IMR-90 (cell line): ENCODE measurements at regions of chr19 and their contacts with region 1.

Region 1: DNA sequence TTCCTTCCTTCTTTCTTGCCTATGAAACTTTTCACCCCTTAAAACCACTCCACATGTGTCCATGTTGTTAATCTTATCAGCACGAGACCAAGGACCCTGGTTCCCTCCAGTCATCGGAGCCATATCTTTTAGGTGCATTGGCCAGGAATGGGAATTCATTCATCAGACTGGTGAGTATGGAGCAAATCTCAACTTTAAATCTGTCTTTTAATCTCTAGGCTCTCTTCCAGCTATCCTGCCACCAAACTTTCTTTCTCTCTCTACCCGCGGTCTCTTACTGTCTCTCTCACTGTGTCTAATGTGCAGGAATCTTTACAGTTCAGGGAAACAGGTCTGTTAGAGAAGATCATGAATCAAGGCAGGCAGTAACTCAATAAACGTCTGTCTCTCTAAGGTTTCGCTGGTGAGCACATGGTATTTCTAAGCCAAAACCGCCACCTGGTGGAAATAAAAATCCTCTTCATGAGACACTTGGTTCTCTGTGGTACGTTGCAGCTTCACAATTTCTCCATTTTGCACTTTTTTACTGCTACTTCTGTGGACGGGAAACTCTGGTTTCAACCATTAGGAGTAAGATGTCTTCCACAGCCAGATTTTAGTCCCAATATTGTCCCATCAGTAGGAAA is 16.1 kb downstream of the LGALS16 start:
- DNase-seq: peak; percentile 43
- ATAC-seq: peak; percentile 69
- H3K4me3 ChIP-seq: no peak overlapping the region
- H3K27ac ChIP-seq: no peak overlapping the region
- H3K4me1 ChIP-seq: no peaks in the 10 kb centered on the region
- H3K27me3 ChIP-seq: 0 out of 2 replicates have a peak, but pooled peaks cover 1% of the 10 kb centered on the region
- CTCF ChIP-seq: peak; percentile 56
- POLR2A ChIP-seq: no peak
- RAD21 ChIP-seq: peak; percentile 68

Region 2: DNA sequence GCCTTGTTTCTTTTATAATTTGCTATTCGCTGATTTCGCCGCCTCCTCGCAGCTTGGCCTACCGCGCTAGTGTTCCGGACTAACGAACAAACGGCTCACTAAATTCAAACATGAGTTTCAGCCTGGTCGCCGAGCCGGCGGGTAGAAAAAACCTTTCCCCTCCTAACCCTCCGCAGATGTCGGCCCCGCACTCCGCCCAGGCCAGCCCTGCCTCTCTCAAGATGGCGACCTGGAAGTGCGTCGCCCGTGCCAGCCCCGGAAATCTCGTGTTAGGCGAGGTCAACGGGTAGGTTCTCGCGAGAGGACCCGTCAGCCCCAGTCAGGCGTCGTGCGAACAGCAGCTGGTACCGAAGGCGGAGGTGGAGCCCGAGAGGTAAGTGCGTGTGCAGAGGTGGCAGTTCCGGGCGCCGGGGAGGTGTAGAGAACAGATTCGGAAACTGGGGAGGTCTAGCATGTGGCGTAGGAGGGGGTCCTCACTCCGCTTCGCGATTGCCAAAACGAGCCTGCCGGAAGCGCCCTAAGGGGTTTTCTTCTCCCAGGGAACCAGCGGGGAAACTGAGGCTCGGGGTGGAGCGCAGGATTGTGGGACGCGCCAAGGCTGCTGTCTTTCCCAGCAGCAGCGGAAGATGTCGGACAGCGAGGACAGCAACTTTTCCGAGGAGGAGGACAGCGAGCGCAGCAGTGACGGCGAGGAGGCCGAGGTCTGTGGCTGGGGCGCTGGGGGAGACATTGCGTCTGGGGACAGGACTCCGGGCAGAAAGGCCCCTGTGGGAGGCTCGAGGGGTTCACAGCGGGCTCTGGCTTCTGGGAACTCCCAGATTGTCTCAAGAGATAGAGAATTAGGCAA is 226.4 kb before region 1 on chr19 and contains the start of gene SUPT5H:
- CTCF ChIA-PET with region 1: no interaction called
- POLR2A ChIA-PET with region 1: no interaction called
- dilution Hi-C with region 1: no loop called
- in situ Hi-C with region 1: no loop called
- intact Hi-C with region 1: loop called (anchors 2 kb)
- DNase-seq: peak; percentile 97
- ATAC-seq: peak; percentile 96
- H3K4me3 ChIP-seq: peak within 1 kb of the TSS; percentile 83
- H3K27ac ChIP-seq: peak within 1 kb of the TSS; percentile 96
- H3K4me1 ChIP-seq: peaks cover 5% of the 10 kb centered on the region
- H3K27me3 ChIP-seq: no peaks in the 10 kb centered on the region
- CTCF ChIP-seq: no peak
- POLR2A ChIP-seq: peak; percentile 94
- RAD21 ChIP-seq: no peak
- total RNA-seq, gene SUPT5H: 75.3 and 86.9 TPM in 2 replicates

Region 3: DNA sequence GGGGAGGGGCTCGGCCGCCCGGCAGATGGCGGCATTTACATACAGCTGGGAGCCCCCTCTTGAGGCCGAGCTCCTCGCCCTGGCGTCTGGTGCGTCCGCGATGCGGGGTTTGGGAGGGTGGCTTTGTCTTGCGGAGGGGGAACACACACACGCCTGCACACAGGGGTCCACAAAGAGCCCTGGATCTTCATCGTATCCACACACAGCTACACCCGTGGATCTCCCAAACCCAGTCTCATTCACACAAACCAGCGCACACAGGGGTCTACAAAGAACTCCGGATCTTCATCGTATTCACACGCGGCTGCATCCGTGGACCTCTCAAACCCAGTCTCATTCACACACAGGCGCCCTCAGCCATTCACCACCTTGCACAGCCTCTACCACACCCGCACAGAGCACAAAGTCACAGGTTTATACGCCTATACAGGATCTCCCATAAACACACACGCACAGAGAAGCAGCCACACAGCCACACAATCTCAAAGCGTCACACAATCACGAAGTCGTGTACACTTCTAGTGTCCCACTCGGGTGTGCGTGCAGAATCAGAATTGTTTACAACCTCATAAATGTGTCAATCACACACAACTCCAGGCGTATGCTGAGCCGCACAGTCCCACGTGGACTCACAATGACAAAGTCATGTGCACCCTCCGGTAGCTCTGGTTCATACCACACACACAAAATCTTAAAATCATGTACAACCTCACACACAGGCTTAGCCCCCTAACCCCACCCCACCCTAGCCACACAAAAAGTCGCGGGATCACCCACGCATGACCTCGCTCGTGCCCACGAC is 173.7 kb before region 1 on chr19:
- CTCF ChIA-PET with region 1: no interaction called
- POLR2A ChIA-PET with region 1: no interaction called
- dilution Hi-C with region 1: no loop called
- in situ Hi-C with region 1: no loop called
- intact Hi-C with region 1: loop called (anchors 5 kb)
- DNase-seq: peak; percentile 19
- ATAC-seq: peak; percentile 77
- H3K4me3 ChIP-seq: peak overlapping the region; percentile 24; the same call in 1 of the 2 replicates
- H3K27ac ChIP-seq: no peak overlapping the region
- H3K4me1 ChIP-seq: peaks cover 3% of the 10 kb centered on the region; the same call in 1 of the 2 replicates
- H3K27me3 ChIP-seq: peaks cover 36% of the 10 kb centered on the region
- CTCF ChIP-seq: peak; percentile 49
- POLR2A ChIP-seq: no peak
- RAD21 ChIP-seq: peak; percentile 39

Region 4: GRCh38 chr19:39509233-39509632 is 162.6 kb before region 1 on chr19:
- CTCF ChIA-PET with region 1: no interaction called
- POLR2A ChIA-PET with region 1: no interaction called
- dilution Hi-C with region 1: no loop called
- in situ Hi-C with region 1: no loop called
- intact Hi-C with region 1: no loop called
- DNase-seq: no peak
- ATAC-seq: no peak
- H3K4me3 ChIP-seq: no peak overlapping the region
- H3K27ac ChIP-seq: no peak overlapping the region
- H3K4me1 ChIP-seq: no peaks in the 10 kb centered on the region
- H3K27me3 ChIP-seq: peaks cover 35% of the 10 kb centered on the region
- CTCF ChIP-seq: no peak
- POLR2A ChIP-seq: no peak
- RAD21 ChIP-seq: no peak

Region 5: DNA sequence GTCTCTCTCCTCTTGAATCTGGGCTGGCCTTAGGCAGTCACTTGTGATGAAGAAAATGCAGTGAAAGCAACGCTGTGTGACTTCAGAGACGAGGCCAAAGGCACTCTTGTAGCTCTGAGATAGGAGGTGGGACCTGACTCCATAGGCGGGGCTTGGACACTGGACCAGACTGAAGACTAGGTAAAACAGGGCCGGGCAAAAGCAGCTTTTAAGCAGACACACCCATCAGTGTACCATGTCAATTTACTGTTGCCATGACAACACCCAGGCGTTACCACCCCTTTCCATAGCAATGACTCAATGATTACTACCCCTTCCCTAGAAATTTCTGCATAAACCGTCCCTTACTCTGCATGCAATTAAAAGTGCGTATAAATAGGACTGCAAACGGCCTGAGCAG is 125.3 kb before region 1 on chr19:
- CTCF ChIA-PET with region 1: no interaction called
- POLR2A ChIA-PET with region 1: no interaction called
- dilution Hi-C with region 1: no loop called
- in situ Hi-C with region 1: loop called (anchors 10 kb)
- intact Hi-C with region 1: loop called (anchors 1 kb)
- DNase-seq: no peak
- ATAC-seq: no peak
- H3K4me3 ChIP-seq: no peak overlapping the region
- H3K27ac ChIP-seq: no peak overlapping the region
- H3K4me1 ChIP-seq: no peaks in the 10 kb centered on the region
- H3K27me3 ChIP-seq: peaks cover 6% of the 10 kb centered on the region
- CTCF ChIP-seq: no peak
- POLR2A ChIP-seq: no peak
- RAD21 ChIP-seq: no peak

Region 6: DNA sequence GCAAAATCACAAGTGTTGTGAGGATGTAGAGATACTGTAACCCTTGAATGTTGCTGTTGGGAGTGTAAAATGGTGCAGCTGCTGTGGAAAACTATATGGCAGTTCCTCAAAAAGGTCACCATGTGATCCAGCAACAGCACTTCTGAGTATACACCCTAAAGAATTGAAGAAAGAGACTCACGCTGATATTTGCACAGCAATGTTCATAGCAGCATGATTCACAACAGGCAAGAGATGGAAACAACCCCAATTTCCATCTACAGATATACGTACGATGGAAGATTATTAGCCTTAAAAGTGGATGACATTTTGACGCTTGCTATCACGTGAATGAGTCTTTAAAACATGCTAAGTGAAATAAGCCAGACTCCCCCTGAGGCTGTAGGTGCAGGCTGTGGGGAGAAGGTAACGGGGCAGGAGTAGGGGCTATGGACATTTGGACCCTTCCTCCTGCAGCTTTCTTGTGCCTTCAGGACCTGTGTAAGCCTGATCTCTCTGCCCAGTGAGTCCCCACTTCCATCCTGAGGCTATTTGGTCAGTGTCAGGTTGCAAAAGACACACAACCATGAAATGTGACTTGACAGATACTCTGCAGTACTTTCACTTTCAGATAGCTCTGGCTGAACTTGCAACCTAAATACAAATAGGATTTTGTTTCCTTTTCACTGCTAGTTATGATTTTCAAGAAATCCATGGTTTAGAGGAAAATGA is 114.3 kb before region 1 on chr19:
- CTCF ChIA-PET with region 1: no interaction called
- POLR2A ChIA-PET with region 1: no interaction called
- dilution Hi-C with region 1: no loop called
- in situ Hi-C with region 1: loop called (anchors 10 kb)
- intact Hi-C with region 1: no loop called
- DNase-seq: peak; percentile 11
- ATAC-seq: peak; percentile 65
- H3K4me3 ChIP-seq: no peak overlapping the region
- H3K27ac ChIP-seq: no peak overlapping the region
- H3K4me1 ChIP-seq: no peaks in the 10 kb centered on the region
- H3K27me3 ChIP-seq: peaks cover 14% of the 10 kb centered on the region
- CTCF ChIP-seq: no peak
- POLR2A ChIP-seq: no peak
- RAD21 ChIP-seq: no peak

Region 7: GRCh38 chr19:39631178-39631577 is 40.7 kb before region 1 on chr19:
- CTCF ChIA-PET with region 1: no interaction called
- POLR2A ChIA-PET with region 1: no interaction called
- dilution Hi-C with region 1: no loop called
- in situ Hi-C with region 1: no loop called
- intact Hi-C with region 1: no loop called
- DNase-seq: no peak
- ATAC-seq: no peak
- H3K4me3 ChIP-seq: no peak overlapping the region
- H3K27ac ChIP-seq: no peak overlapping the region
- H3K4me1 ChIP-seq: no peaks in the 10 kb centered on the region
- H3K27me3 ChIP-seq: no peaks in the 10 kb centered on the region
- CTCF ChIP-seq: no peak
- POLR2A ChIP-seq: no peak
- RAD21 ChIP-seq: no peak

Region 8: DNA sequence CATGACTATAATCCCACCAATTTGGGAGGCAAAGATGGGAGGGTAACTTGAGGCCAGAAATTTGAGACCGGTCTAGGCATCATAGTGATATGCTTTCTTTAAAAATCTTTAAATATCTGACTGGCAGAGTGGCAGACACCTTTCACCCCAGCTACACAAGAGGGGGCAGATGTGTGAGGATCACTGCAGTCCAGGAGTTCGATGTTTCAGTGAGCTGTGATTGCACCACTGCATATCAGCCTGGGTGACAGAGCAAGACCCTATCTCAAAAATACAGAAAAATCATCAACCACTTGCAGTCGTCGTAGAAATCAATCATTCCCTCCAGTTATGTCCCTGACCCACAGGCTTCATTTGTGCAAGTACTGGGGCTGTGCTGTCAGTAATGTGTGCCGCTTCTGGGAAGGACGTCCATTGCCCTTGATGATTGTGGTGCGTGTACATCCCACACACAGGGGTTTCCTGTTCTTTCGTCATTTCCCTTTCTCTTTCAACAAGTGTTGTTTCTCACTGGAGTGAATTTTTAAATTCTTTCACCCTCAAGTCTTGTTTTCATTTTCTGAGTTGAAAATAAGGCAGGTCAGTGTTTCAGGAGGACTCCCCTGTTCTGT is 33.8 kb after region 1 on chr19:
- CTCF ChIA-PET with region 1: no interaction called
- POLR2A ChIA-PET with region 1: no interaction called
- dilution Hi-C with region 1: no loop called
- in situ Hi-C with region 1: no loop called
- intact Hi-C with region 1: no loop called
- DNase-seq: no peak
- ATAC-seq: no peak
- H3K4me3 ChIP-seq: no peak overlapping the region
- H3K27ac ChIP-seq: no peak overlapping the region
- H3K4me1 ChIP-seq: no peaks in the 10 kb centered on the region
- H3K27me3 ChIP-seq: no peaks in the 10 kb centered on the region
- CTCF ChIP-seq: no peak
- POLR2A ChIP-seq: no peak
- RAD21 ChIP-seq: no peak

Region 9: DNA sequence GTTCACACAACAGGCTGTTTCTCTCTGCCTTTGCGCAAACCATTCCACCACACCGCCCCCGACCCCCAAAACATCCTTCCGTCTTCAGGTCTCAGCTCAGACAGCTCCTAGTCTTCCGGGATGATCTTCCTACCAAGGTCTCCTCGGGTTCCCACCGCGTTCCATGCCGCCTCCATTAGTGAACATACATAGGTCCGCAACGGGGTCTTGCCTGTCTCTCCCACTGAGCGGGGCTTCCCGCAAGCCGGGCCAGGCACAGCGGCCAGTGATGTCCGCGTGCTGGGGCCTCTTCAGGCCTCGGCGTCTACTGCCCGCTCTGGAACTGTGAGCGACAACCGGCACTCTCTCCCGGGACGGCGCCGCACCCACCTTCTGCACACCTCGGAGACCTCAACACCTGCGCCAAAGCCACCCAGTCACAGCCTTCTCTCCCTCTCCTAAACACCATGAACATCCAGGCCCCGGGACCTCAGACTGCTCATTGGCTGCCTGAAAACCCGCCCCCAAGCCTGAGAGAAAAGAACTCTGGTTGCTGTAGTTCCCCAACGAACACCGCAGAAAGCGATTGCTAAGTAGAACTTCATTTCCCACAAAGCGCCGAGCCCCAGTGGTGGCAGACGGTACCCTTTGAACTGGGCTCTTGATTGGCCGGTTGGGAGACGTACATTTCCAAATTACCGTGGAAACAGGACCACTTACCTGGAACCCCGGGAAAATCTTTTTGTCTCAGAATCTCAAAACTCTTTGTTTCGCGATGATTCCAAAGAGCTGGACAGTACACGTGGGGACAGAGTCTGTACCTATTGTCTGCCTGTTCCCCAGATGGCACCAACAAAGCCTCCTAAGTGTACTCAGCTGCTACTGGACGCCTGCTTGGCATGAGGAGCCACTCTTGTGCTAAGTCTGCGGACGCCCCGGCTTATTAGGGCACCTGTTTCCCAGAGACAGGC is 152.6 kb after region 1 on chr19:
- CTCF ChIA-PET with region 1: no interaction called
- POLR2A ChIA-PET with region 1: no interaction called
- dilution Hi-C with region 1: no loop called
- in situ Hi-C with region 1: no loop called
- intact Hi-C with region 1: no loop called
- DNase-seq: peak; percentile 91
- ATAC-seq: peak; percentile 98
- H3K4me3 ChIP-seq: peak overlapping the region; percentile 60
- H3K27ac ChIP-seq: peak overlapping the region; percentile 34
- H3K4me1 ChIP-seq: peaks cover 5% of the 10 kb centered on the region
- H3K27me3 ChIP-seq: no peaks in the 10 kb centered on the region
- CTCF ChIP-seq: no peak
- POLR2A ChIP-seq: peak; percentile 33; the same call in 1 of the 2 replicates
- RAD21 ChIP-seq: no peak